ENCODE measurements at regions of chr3 and their contacts with region 1.

Region 1: DNA sequence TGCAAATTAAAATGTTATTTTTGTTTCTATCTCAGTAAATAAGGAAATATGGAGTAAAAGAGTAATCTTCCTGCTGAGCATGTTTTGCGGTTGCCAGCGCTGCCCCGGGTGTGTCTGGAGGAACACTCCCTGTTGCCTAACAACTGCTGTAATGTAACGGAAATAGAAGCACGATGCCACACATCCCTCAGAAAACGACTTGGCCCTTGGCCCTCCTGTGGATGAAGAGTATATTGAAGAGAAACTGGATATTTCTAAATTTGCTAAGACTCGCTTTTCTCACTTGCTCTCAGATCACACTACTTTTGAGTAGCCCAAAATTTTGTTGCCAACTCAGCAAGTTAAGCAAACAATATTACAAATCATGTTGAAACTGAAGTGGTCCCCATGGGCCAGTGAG is 18.9 kb downstream of the CX3CR1 start:
- DNase-seq: peak; percentile 73
- H3K4me3 Mint-ChIP-seq: no peak overlapping the region
- H3K27ac Mint-ChIP-seq: peak overlapping the region; percentile 50
- H3K4me1 Mint-ChIP-seq: peaks cover 28% of the 10 kb centered on the region
- H3K27me3 Mint-ChIP-seq: peaks cover 4% of the 10 kb centered on the region

Region 2: GRCh38 chr3:39208463-39209055 is 52.4 kb before region 1 on chr3:
- CTCF ChIA-PET with region 1: interaction called, 3 read pairs
- POLR2A ChIA-PET with region 1: no interaction called
- intact Hi-C with region 1: loop called (anchors 5 kb)
- DNase-seq: peak; percentile 55
- H3K4me3 Mint-ChIP-seq: no peak overlapping the region
- H3K27ac Mint-ChIP-seq: no peak overlapping the region
- H3K4me1 Mint-ChIP-seq: peaks cover 5% of the 10 kb centered on the region
- H3K27me3 Mint-ChIP-seq: no peaks in the 10 kb centered on the region

Measured in activated CD4-positive, alpha-beta memory T cell treated with anti-CD3 and anti-CD28 coated beads for 36 hours (primary cell).